AG04450 (cell line): ENCODE measurements at regions of chr1 and their contacts with region 1.

Region 1: GRCh38 chr1:116485071-116485735 is 85.6 kb downstream of the CD58 start:
- DNase-seq: peak; percentile 56
- H3K4me3 ChIP-seq: no peak overlapping the region
- H3K27ac ChIP-seq: no peak overlapping the region
- H3K27me3 ChIP-seq: peaks cover 5% of the 10 kb centered on the region
- CTCF ChIP-seq: peak; percentile 90

Region 2: DNA sequence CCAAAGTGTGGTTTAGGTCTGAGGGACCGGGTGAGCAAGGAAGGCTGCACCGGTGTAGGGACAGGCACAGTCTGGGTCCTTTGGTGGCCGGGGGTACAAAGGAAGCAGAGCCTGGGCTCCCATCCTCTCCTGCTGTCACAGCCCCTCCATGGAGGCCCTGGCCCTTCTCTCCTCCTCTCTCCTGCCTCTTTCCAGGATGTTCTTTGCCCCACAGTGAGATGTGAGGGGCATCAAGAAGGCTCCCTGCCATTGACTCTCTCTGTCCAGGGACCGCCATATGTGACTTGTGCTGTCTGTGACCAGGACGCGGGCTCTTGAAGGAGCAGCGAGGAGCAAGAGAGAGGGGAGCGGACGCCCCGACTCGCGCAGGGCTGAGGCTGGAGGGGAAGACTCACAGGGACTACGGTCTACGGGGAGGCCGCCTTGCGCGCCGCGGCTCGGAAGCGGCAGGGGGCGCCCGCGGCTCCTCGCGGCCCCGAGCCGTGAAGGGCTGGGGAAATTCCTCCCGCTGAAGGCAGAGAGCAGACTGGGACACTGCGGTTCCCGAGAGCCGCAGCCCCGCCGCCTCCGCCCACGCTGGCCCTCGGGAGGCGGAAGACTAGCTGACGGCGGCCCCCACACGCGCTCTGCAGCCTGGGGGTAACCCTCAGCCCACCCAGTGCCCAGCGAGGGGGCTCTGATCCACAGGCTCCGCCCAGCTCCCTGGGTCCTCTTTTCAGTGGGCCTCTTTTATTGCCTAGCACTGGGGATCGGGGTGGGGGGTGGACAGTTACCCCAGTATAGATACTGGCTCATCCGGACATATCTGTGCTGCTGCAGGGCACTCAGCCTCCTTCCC is 333.2 kb before region 1 on chr1:
- CTCF ChIA-PET with region 1: interaction called, 99 read pairs
- POLR2A ChIA-PET with region 1: no interaction called
- DNase-seq: peak; percentile 21
- H3K4me3 ChIP-seq: peak overlapping the region; percentile 56
- H3K27ac ChIP-seq: no peak overlapping the region
- H3K27me3 ChIP-seq: peaks cover 8% of the 10 kb centered on the region
- CTCF ChIP-seq: peak; percentile 73

Region 3: GRCh38 chr1:116360429-116361173 is 124.6 kb before region 1 on chr1:
- CTCF ChIA-PET with region 1: interaction called, 21 read pairs
- POLR2A ChIA-PET with region 1: no interaction called
- DNase-seq: no peak
- H3K4me3 ChIP-seq: no peak overlapping the region
- H3K27ac ChIP-seq: no peak overlapping the region
- H3K27me3 ChIP-seq: peaks cover 8% of the 10 kb centered on the region
- CTCF ChIP-seq: peak; percentile 27; the same call in 1 of the 2 replicates

Region 4: DNA sequence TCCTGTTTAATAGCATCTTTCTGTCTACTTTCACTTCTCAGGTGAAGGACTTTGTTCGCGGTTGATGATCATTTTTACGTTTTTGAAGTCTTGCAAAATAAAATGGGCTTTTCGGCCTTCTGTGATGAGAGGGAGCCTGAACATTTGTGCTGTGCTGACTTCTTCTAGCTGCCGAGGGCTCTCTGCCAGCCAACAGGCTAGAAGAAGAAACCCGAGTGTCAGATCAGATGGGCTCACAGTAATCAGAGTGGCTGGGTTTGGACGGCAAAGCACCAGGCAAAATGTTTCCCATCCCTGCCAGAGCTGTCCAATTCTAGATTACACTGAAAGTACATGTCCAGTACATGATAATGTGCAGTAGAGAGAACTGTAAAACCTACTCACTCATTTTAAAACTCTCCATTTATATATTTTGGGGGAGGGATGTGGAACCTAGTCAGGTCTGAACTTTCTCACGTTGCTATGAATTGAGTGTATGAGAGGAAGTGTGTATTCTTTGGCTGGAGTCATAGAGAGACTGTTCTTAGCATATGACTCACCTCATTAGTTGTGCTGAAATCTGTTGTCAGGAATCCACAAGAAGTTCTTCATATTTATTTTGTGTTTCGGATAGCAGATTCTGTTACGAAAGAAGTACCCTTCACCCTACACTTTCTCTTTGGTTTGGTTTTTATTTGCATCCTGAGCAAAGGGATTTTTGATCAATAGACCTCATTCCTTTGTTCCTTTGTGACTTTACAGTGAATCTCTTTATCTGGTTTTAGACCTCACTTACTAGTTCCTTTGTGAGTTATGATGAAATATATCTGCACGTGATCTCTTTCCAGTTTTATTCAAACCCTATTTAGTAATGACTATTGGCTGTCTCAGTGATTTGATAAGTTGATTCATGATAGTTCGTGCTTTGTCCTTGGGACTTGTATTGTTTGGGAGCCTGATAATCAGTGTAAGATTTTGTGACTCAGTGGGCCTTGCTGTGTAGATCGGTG is 107.4 kb before region 1 on chr1:
- CTCF ChIA-PET with region 1: interaction called, 12 read pairs
- POLR2A ChIA-PET with region 1: interaction called, 4 read pairs
- DNase-seq: peak; percentile 75
- H3K4me3 ChIP-seq: peak overlapping the region; percentile 46
- H3K27ac ChIP-seq: peak overlapping the region; percentile 93
- H3K27me3 ChIP-seq: no peaks in the 10 kb centered on the region
- CTCF ChIP-seq: no peak

Region 5: DNA sequence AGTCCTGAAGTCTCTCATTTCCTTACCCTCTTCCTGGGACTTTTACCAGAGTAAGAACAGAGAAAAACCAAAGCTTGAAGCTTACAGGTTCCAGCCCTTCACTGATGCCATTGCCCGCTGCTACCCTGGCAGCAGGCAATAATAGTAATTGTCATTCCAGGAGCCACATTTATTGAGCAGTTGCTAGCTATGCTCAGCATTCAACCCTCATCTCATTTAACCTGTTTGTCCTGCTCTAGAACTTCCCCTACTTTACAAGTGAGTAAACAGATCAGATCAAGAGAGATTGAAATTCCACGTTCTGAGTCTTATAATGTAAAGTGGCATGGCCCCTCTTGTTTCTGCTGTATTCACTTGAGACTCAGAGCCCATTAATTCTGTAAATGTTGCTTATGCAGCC is 31.7 kb before region 1 on chr1:
- CTCF ChIA-PET with region 1: interaction called, 10 read pairs
- POLR2A ChIA-PET with region 1: no interaction called
- DNase-seq: no peak
- H3K4me3 ChIP-seq: no peak overlapping the region
- H3K27ac ChIP-seq: no peak overlapping the region
- H3K27me3 ChIP-seq: peaks cover 2% of the 10 kb centered on the region
- CTCF ChIP-seq: no peak

Region 6: DNA sequence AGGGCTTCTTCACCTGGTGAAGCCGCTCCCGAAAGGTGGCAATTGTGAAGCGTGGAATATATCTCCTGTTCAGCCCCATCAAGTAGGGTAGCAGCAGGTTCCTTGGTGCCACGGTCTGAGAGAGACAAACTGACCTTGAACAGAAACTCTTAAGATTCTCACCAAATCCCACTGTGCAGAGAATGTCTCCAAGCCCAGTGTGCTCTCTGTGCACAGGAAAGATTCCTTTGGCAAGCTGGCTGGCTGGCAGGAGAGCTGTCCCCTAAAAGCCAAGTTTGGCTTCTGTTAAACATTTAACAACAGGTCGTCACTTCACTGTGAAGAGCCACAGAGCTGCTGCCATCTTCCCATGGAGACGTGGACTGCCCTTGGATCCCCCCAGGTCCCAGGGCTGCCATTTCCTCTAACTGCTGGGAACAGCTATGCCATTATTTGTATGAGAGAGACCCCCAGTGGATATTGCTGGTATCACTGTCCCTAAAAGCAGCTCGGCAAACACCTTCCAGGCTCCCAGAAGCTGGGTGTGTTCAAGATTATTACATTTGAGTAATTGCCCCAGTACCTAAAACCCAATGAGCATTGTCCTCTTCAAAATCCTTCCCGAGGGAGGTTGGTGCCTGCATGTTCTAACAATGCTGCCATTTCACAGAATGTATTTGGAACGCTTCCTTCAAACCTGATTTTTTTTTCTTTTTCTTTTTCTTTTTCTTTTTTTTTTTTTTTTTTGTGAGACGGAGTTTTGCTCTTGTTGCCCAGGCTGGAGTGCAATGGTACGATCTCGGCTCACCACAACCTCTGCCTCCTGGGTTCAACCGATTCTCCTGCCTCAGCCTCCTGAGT is 13.8 kb after region 1 on chr1:
- CTCF ChIA-PET with region 1: interaction called, 184 read pairs
- POLR2A ChIA-PET with region 1: no interaction called
- DNase-seq: no peak
- H3K4me3 ChIP-seq: no peak overlapping the region
- H3K27ac ChIP-seq: no peak overlapping the region
- H3K27me3 ChIP-seq: no peaks in the 10 kb centered on the region
- CTCF ChIP-seq: peak; percentile 91